Activated T-helper 1 cell treated with anti-CD3 and anti-CD28 coated beads, Interleukin-12 subunit alpha, Interleukin-12 subunit beta, Interleukin-2, Interleukin-4 antibody, amounts not matched to agents 30 ng/mL and 10 ng/mL and 1 ng/mL, durations not matched to agents 14 hours and 24 hours and 36 hours (primary cell): ENCODE measurements at regions of chr1 and their contacts with region 1.

Region 1: DNA sequence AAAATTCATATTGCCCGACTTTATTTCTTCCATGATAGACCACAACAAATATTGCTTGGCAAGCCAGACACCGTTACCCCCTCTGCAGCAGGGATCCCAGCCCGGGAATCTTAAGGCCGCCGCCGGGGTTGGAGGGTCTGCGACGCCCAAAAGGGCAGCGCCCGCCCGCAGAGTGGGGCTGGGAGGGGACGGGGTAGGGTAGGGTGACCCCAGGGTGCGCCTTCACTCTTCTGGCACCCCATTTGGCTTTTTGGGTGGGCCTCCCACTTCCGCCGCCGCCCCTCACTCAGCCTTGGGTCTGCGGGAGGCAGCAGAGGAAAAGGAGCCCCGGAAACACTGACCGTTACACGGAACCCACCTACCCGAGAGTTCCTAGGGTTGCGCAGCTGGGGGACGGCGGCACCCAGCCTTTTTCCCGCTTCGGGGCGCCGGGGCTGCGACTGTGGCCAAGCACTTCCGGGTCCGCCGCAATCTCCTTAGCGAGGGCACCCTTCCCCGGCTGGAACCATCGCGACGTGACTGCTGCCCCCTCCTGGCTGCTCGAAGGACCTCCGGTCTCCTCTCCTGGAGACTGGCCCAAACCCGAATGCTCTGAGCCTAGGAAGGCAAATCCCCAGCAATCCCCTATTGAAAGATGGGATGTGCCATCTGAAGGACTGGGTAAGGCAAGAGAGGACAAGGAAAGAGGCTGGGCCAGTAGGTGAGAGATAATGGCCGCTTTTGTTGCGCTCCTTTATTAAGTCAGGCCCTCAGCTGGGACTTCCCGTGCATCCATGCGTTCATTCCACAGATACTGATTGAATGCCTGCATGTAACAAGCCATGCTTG is at the start of gene PIGC:
- DNase-seq: peak; percentile 85
- H3K4me3 Mint-ChIP-seq: peak within 1 kb of the TSS; percentile 94
- H3K27ac Mint-ChIP-seq: peak within 1 kb of the TSS; percentile 86
- H3K4me1 Mint-ChIP-seq: peaks cover 33% of the 10 kb centered on the region
- H3K27me3 Mint-ChIP-seq: no peaks in the 10 kb centered on the region
- total RNA-seq, gene PIGC: 22.6 and 23.3 TPM in 2 replicates

Region 2: DNA sequence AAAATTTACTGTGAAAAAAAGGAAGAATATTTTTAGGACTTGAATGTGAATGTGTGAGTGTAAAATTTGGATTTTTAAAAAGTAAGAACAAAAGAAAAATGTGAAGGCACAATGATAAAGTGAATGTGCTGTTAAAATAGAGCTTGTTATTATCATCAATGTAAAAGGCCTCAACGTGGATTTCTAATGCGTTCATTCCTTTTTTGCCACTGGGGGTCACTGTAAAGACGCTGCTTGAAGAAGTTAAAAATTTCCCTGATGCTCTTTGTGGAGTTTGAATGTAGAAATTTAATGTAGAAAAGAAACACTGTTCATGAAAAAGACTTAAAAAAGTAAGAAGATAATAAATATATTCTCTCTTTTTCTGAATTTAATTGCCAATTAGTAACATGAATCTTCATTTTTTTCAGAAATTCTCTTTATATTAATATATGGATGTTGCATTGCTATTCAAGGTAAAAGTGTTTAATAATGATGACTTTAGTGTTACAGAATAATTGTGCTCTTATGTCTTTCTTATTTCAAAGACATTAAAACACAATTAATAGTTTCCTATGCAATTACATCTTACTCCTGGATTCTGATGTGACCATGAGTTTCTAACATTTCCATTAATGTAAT is 441.0 kb before region 1 on chr1:
- intact Hi-C with region 1: loop called (anchors 1 kb)
- DNase-seq: no peak
- H3K4me3 Mint-ChIP-seq: no peak overlapping the region
- H3K27ac Mint-ChIP-seq: no peak overlapping the region
- H3K4me1 Mint-ChIP-seq: no peaks in the 10 kb centered on the region
- H3K27me3 Mint-ChIP-seq: no peaks in the 10 kb centered on the region

Region 3: DNA sequence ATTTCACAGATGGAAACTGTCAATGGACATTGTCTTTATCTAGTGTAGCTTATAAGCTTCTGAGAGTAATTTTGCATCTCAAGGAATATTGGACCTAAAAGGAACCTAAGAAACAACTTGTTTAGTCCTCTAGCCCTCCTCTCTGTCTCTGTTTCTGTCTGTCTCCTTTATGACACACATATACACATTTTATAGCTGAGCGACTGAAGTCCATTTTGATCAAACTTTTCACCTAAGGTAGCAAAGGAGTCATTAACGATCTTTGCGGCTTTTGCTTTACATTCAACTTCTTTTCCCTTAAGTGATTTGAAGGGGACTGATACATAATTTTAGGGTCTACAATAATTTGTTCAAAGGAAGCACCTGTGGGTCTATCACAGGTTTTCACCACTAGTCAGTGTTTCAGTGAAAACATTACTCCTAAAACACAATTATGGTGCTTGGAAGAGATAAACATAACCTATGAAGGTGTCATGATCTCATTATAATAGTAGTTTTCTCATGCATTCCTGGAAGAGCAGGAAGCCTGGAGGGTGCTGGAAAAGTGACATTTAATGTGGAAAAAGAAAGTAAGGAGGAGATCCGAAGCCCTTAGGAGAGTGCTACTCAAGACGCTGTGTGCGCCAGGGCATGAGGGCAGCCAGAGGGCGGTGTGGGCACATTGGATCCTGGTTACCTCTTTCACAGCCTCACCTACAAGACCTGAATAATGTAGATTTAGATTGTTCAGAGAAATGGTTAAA is 353.9 kb before region 1 on chr1:
- intact Hi-C with region 1: loop called (anchors 1 kb)
- DNase-seq: peak; percentile 20
- H3K4me3 Mint-ChIP-seq: no peak overlapping the region
- H3K27ac Mint-ChIP-seq: peak overlapping the region; percentile 36
- H3K4me1 Mint-ChIP-seq: peaks cover 7% of the 10 kb centered on the region
- H3K27me3 Mint-ChIP-seq: no peaks in the 10 kb centered on the region

Region 4: DNA sequence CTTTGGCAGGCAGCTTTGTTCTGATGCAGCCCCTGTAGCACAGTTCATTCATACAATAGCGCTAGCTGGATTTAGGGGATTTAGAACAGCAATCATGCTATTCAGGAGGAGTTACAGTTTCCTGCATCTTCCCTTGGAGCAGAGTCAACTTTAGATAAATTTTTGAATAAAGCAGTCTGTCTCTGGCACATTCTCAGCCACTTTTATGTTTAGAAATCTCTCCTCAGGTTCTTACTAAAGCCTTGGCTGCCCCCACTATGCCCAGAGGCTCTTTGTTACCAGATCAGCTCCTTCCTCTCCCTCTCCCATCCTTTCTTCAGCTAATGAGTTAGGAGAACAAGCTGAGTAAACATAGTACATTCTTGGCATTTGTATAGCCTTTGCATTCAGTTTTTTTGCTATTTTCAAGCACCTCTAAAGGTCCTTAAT is 17.1 kb after region 1 on chr1:
- intact Hi-C with region 1: no loop called
- DNase-seq: no peak
- H3K4me3 Mint-ChIP-seq: no peak overlapping the region
- H3K27ac Mint-ChIP-seq: no peak overlapping the region
- H3K4me1 Mint-ChIP-seq: no peaks in the 10 kb centered on the region
- H3K27me3 Mint-ChIP-seq: peaks cover 18% of the 10 kb centered on the region